B cell (primary cell): ENCODE measurements at regions of chr7 and their contacts with region 1.

Region 1: DNA sequence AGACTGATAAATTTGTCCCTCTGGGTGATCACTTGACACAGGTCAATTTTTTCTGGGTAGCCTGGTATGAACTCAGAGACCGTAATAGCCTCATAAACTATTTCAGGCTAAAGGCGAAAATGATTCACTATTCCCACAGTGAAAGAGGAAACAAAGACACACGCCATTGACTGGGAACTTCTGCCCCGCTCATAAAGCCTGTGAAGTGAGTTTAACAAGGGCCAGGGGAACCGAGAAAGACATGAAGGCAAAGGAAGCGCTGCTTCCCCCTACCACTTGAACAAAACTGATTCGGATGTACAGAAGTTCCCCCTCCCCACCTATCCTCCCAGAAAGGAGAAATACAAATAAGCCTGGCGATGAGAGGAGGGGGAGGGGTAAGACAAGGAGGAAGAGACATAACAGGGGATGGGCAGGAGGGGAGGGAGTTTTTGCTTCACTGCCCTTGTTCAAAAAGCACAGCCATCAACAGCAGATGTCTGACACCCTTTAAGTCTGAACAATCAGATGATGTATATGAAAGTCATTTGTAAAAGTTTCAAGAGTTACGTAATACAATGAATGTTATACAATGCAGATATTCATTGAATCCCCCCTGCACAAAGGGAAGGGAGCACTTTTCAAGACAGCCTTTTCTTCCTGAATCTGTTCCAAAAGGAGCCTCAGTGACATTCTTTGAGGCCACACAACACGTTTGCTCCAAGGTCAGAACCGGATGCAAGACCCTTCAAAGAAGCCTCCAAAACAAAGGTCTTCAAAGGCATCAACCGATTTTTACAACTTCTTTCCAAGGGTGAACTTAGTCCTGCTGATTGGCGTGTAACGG is 734 bp downstream of the ABCB4 start:
- DNase-seq: peak; percentile 89
- ATAC-seq: peak; percentile 68
- H3K4me3 ChIP-seq: peak overlapping the region; percentile 54 to 87 (median 73)
- H3K4me3 Mint-ChIP-seq: peak overlapping the region; percentile 93
- H3K27ac ChIP-seq: peak overlapping the region; percentile 87 to 92
- H3K27ac Mint-ChIP-seq: peak overlapping the region; percentile 97
- H3K4me1 ChIP-seq: peaks cover 29 to 42% of the 10 kb centered on the region in 2 donors
- H3K4me1 Mint-ChIP-seq: peaks cover 46% of the 10 kb centered on the region
- H3K27me3 ChIP-seq: no peaks in the 10 kb centered on the region
- H3K27me3 Mint-ChIP-seq: no peaks in the 10 kb centered on the region
- CTCF ChIP-seq: no peak

Region 2: DNA sequence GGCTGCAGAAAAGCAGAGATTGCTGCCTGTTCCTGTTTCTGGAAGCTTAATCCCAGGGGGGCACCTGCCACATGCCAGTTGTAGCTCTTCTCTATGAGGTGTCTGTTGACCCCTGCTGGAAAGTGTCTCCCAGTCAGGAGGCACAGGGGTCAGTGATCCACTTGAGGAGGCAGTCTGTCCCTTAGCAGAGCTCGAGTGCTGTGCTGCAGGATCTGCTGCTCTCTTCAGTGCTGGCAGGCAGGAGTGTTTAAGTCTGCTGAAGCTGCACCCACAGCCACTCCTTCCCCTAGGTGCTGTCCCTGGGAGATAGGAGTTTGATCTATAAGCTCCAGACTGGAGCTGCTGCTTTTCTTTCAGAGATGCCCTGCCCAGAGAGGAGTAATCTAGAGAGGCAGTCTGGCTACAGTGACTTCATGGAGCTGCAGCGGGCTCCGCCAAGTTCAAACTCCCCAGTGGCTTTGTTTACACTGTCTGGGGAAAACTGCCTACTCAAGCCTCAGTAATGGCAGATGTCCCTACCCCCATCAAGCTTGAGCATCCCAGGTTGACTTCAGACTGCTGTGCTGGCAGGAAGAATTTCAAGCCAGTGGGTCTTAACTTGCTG is 186.9 kb before region 1 on chr7:
- CTCF ChIA-PET with region 1: no interaction called
- POLR2A ChIA-PET with region 1: no interaction called
- intact Hi-C with region 1: no loop called
- DNase-seq: no peak
- ATAC-seq: no peak
- H3K4me3 ChIP-seq: no peak overlapping the region
- H3K4me3 Mint-ChIP-seq: no peak overlapping the region
- H3K27ac ChIP-seq: no peak overlapping the region
- H3K27ac Mint-ChIP-seq: no peak overlapping the region
- H3K4me1 ChIP-seq: no peaks in the 10 kb centered on the region
- H3K4me1 Mint-ChIP-seq: no peaks in the 10 kb centered on the region
- H3K27me3 ChIP-seq: peaks cover 0 to 7% (median 3%) of the 10 kb centered on the region in 4 experiments
- H3K27me3 Mint-ChIP-seq: peaks cover 8% of the 10 kb centered on the region
- CTCF ChIP-seq: no peak

Region 3: DNA sequence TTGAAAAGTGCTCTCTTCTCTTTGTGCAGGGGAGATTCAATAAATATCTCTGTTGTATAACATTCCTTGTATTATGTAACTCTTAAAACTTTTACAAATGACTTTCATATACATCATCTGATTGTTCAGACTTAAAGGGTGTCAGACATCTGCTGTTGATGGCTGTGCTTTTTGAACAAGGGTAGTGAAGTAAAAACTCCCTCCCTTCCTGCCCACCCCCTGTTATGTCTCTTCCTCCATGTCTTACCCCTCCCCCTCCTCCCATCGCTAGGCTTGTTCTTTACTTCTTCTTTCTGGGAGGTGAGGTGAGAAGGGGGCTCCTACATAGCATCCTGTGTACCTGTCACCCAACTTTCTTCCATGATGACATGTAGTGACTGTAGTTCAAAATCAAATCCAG is 24.1 kb after region 1 on chr7:
- CTCF ChIA-PET with region 1: no interaction called
- POLR2A ChIA-PET with region 1: no interaction called
- intact Hi-C with region 1: loop called (anchors 2 kb)
- DNase-seq: peak; percentile 72
- ATAC-seq: peak; percentile 86
- H3K4me3 ChIP-seq: no peak overlapping the region
- H3K4me3 Mint-ChIP-seq: peak overlapping the region; percentile 32
- H3K27ac ChIP-seq: peak overlapping the region; percentile 54 to 82
- H3K27ac Mint-ChIP-seq: peak overlapping the region; percentile 85
- H3K4me1 ChIP-seq: peaks cover 16 to 23% of the 10 kb centered on the region in 2 donors
- H3K4me1 Mint-ChIP-seq: peaks cover 33% of the 10 kb centered on the region
- H3K27me3 ChIP-seq: no peaks in the 10 kb centered on the region
- H3K27me3 Mint-ChIP-seq: no peaks in the 10 kb centered on the region
- CTCF ChIP-seq: no peak

Region 4: DNA sequence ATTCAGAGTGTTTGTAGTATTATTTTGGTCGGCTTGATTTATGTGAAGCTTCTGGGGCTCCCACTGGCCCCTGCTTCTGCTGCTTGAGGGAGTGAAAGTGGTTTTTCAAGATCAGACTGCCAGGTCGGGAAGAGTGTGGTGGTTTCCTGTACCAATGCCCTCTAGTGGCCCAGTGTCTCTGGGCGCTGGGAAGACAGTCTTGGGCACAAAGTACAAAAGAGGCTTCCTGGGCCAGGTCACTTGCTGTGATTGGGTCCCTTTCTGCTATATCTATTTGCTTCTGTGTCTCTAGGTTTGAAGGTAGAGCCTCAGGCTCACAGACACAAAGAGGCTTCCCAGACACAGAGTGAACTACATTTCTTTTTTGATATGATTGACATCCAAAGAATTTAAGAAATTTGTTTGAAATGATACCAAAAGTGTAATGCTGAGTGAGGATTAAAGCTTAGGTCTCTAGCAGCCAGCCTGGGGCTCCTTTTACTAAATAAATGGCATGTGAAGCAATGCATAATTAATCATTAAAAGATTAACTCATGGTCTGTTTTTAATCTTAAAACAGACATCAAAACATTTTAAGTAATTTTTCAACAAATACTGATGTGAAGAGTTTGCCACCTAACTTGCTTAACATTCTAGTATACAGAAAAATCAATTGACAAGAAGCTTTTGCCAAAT is 89.7 kb after region 1 on chr7:
- CTCF ChIA-PET with region 1: no interaction called
- POLR2A ChIA-PET with region 1: no interaction called
- intact Hi-C with region 1: loop called (anchors 10 kb)
- DNase-seq: peak; percentile 56
- ATAC-seq: peak; percentile 54
- H3K4me3 ChIP-seq: no peak overlapping the region
- H3K4me3 Mint-ChIP-seq: no peak overlapping the region
- H3K27ac ChIP-seq: no peak overlapping the region
- H3K27ac Mint-ChIP-seq: peak overlapping the region; percentile 12
- H3K4me1 ChIP-seq: no peaks in the 10 kb centered on the region
- H3K4me1 Mint-ChIP-seq: peaks cover 5% of the 10 kb centered on the region
- H3K27me3 ChIP-seq: no peaks in the 10 kb centered on the region
- H3K27me3 Mint-ChIP-seq: peaks cover 3% of the 10 kb centered on the region
- CTCF ChIP-seq: peak; percentile 43

Region 5: GRCh38 chr7:87628780-87629569 is 154.2 kb after region 1 on chr7:
- CTCF ChIA-PET with region 1: no interaction called
- POLR2A ChIA-PET with region 1: no interaction called
- intact Hi-C with region 1: loop called (anchors 1 kb)
- DNase-seq: peak; percentile 66
- ATAC-seq: peak; percentile 18
- H3K4me3 ChIP-seq: peak overlapping the region in 4 of 5 experiments; percentile 59 to 80 (median 70)
- H3K4me3 Mint-ChIP-seq: peak overlapping the region; percentile 82
- H3K27ac ChIP-seq: no peak overlapping the region
- H3K27ac Mint-ChIP-seq: no peak overlapping the region
- H3K4me1 ChIP-seq: peaks cover 13 to 17% of the 10 kb centered on the region in 2 donors
- H3K4me1 Mint-ChIP-seq: peaks cover 17% of the 10 kb centered on the region
- H3K27me3 ChIP-seq: peaks cover 0 to 19% (median 8%) of the 10 kb centered on the region in 4 experiments
- H3K27me3 Mint-ChIP-seq: peaks cover 19% of the 10 kb centered on the region
- CTCF ChIP-seq: no peak